ENCODE measurements at regions of chr4 and their contacts with region 1.

Region 1: DNA sequence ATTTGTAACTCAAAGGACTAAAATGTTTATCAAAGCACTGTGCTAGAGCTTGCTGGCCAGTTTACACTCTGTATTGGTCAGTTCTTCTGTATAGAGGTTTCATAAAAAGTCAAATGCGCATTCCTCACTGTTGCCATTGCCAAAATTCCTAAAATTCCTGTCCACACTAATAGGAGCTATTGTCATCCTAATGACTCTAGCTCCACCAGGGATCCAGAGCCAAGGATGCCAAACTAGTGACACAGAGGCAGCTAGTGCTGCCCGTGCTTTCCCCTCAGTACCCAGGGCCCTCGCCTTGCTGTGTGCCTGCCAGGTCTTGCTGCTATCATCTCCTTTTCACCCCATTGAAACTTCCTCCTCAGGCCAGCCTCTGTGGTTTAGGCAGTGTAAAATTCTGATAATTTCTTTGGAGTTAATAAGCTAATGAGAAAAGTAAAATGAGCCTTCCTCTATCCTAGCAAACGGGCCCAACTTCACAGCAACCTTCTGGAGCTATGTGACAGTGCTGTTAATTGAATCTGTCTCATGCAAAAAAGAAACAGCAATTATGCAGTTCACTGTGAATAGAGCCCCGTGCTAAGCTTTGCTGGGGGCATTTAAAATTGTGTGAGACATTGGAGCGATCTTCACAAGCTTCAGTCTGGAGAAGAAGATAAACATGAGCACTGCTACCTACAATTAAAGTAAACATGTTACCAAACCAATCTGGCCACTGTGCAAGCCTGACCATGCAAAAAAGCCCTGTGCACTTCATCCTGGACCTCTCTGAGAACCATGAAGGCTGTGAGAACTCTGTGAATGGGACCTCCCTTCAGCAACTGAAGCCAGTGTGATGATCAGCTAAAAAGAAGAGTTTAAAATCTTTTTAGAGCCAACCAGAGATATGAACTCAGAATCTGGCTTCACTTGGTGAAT is 43.1 kb upstream of the FGF2 start:
- DNase-seq: peak; percentile 77
- H3K4me3 Mint-ChIP-seq: peak overlapping the region; percentile 3
- H3K27ac Mint-ChIP-seq: peak overlapping the region; percentile 57
- H3K4me1 Mint-ChIP-seq: peaks cover 31% of the 10 kb centered on the region
- H3K27me3 Mint-ChIP-seq: no peaks in the 10 kb centered on the region
- CTCF ChIP-seq: no peak

Region 2: GRCh38 chr4:121923306-121923705 is 860.3 kb before region 1 on chr4:
- CTCF ChIA-PET with region 1: no interaction called
- POLR2A ChIA-PET with region 1: no interaction called
- intact Hi-C with region 1: no loop called
- DNase-seq: no peak
- H3K4me3 Mint-ChIP-seq: no peak overlapping the region
- H3K27ac Mint-ChIP-seq: no peak overlapping the region
- H3K4me1 Mint-ChIP-seq: no peaks in the 10 kb centered on the region
- H3K27me3 Mint-ChIP-seq: no peaks in the 10 kb centered on the region
- CTCF ChIP-seq: no peak

Region 3: DNA sequence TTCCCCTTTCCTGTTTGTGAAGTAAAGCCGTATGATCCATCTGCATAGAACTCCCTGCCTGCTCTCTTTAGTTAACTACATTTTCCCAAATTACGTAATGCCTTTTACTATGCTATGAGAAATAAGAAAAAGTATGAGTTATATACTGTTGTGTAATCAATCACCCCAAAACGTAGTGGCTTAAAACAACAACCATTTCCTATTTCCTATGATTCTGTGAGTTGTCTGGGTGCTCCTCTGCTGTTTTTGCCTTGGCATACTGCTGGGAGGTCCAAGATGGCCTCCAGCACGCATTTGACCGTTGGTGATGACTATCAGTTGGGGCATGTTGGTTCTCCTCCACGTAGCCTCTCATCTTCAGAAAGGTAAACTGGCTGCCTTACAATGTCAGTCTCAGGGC is 11.2 kb before region 1 on chr4:
- CTCF ChIA-PET with region 1: interaction called, 4 read pairs
- POLR2A ChIA-PET with region 1: interaction called, 10 read pairs
- intact Hi-C with region 1: no loop called
- DNase-seq: peak; percentile 76
- H3K4me3 Mint-ChIP-seq: no peak overlapping the region
- H3K27ac Mint-ChIP-seq: peak overlapping the region; percentile 61
- H3K4me1 Mint-ChIP-seq: peaks cover 29% of the 10 kb centered on the region
- H3K27me3 Mint-ChIP-seq: no peaks in the 10 kb centered on the region
- CTCF ChIP-seq: no peak

Region 4: DNA sequence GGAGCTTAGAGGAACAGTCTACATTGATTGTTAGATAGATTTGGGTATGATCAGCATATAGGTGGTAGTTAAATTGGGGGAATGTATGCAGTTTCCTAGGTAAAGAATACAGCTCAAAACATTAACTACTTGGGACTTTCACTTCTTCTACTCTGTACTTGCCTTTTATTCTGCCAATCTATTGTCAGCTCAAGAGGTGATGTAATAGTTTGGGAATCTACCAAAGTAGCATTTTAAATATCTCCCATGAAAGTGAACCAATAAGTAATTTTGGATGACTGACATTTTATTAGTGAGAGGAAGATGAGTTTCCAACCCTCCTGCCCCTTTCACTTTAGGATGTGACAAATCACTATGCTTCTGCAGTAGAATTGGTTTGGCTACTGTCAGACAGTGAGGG is 95.4 kb after region 1 on chr4:
- CTCF ChIA-PET with region 1: no interaction called
- POLR2A ChIA-PET with region 1: no interaction called
- intact Hi-C with region 1: no loop called
- DNase-seq: no peak
- H3K4me3 Mint-ChIP-seq: no peak overlapping the region
- H3K27ac Mint-ChIP-seq: no peak overlapping the region
- H3K4me1 Mint-ChIP-seq: peaks cover 18% of the 10 kb centered on the region
- H3K27me3 Mint-ChIP-seq: no peaks in the 10 kb centered on the region
- CTCF ChIP-seq: no peak

Region 5: GRCh38 chr4:123055943-123056342 is 272.4 kb after region 1 on chr4:
- CTCF ChIA-PET with region 1: no interaction called
- POLR2A ChIA-PET with region 1: no interaction called
- intact Hi-C with region 1: no loop called
- DNase-seq: peak; percentile 11
- H3K4me3 Mint-ChIP-seq: no peak overlapping the region
- H3K27ac Mint-ChIP-seq: peak overlapping the region; percentile 31
- H3K4me1 Mint-ChIP-seq: peaks cover 5% of the 10 kb centered on the region
- H3K27me3 Mint-ChIP-seq: no peaks in the 10 kb centered on the region
- CTCF ChIP-seq: no peak

Measured in MCF 10A (cell line).